ENCODE measurements at regions of chr5 and their contacts with region 1.

Region 1: GRCh38 chr5:173972925-173973615 is 15.9 kb upstream of the C5orf47 start:
- DNase-seq: no peak
- ATAC-seq: peak; percentile 86

Region 2: DNA sequence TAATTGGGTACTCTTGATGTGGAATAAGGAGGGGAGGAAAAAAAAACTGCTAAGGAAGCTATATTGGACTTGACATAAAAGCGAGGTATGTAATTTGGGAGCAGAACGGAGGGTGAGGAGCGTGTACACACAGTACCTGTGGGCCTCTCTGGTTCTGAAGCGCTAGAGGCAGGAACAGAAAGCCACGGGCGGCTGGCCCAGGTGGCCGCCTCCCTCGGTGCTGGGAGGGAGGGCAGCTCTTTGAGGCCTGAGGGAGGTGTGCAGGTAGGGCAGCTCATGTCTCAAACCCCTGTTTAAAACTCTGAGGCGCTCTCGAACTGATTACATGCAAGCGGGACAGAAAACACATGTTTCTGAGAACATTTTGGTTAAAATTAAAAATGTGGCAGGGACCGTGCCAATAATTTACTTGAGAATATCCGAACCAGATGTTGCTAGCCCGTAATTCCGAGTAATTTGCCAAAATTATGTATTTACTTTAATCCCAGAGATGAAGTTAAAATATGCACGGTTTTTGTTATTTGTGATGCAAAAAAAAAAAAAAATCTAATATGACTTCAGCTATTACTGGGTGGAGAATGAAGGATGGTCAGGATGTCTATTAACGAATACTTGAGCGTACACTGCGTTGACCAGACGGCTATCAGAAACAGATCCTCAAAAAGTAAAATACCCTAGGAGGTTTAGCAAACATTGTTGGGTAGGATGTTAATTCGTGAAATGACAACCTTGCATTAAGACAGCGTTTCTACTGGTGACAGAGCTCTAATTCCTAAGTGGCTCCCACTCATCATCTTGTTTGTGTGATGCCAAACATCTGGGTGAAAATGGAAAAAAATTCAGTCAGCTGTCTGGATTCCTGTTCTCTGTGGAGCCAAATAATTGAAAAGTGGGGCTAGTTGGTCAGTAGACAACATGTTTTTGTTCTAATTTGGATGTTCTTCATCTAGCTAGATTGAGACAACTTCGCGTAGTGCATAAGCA is 620.4 kb before region 1 on chr5:
- intact Hi-C with region 1: no loop called
- DNase-seq: no peak
- ATAC-seq: peak; percentile 52

Region 3: GRCh38 chr5:173615884-173616576 is 357.0 kb before region 1 on chr5:
- intact Hi-C with region 1: loop called (anchors 1 kb)
- DNase-seq: no peak
- ATAC-seq: peak; percentile 60

Region 4: GRCh38 chr5:173903396-173904140 is 69.5 kb before region 1 on chr5:
- intact Hi-C with region 1: no loop called
- DNase-seq: no peak
- ATAC-seq: no peak

Region 5: DNA sequence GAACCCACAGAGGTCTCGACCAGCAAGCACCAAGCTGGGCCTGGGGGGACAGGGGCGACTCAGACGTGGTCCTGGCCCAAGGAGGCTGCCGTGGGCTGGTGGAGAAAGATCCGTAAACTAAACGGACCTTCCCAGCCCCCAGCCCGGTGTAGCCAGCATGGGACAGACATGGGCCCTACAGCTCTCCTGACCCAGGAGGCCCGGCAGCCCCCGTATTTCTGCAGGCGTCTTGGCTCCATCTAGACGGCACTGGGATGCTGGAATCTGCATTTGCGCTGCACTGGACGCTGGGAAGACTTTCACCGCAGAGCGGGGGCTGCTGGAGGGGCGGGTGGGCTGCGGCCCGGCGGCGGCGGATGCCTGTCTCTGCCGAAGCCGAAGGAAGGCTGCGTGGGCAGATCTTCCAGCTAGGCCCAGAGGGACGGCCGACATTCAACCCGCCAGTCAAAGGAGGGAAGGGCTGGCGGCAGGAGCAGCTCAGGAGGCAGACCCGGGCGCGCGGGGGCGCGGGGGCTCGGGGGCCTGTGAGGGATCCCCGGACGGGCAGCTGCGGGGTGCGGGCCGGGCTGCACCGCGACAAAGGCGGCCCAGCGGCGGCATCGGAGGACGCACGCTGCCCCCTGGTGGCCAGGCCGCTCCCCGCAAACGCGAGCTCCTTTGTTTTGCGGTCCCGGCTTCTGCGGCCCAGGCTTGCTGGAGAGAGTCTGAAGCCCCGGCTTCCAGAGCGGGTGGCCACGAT is 338.6 kb after region 1 on chr5:
- intact Hi-C with region 1: loop called (anchors 10 kb)
- DNase-seq: peak; percentile 83
- ATAC-seq: peak; percentile 74

Measured in Right ventricle myocardium inferior (tissue), 1 donor.